ENCODE measurements at regions of chr6 and their contacts with region 1.

Region 1: GRCh38 chr6:34696739-34697543 is at the start of gene ILRUN:
- DNase-seq: peak; percentile 91
- H3K4me3 Mint-ChIP-seq: peak within 1 kb of the TSS; percentile 92
- H3K27ac Mint-ChIP-seq: peak within 1 kb of the TSS; percentile 91
- H3K4me1 Mint-ChIP-seq: peaks cover 34% of the 10 kb centered on the region
- H3K27me3 Mint-ChIP-seq: no peaks in the 10 kb centered on the region
- total RNA-seq, gene ILRUN: 68.7 and 72.9 TPM in 2 replicates

Region 2: DNA sequence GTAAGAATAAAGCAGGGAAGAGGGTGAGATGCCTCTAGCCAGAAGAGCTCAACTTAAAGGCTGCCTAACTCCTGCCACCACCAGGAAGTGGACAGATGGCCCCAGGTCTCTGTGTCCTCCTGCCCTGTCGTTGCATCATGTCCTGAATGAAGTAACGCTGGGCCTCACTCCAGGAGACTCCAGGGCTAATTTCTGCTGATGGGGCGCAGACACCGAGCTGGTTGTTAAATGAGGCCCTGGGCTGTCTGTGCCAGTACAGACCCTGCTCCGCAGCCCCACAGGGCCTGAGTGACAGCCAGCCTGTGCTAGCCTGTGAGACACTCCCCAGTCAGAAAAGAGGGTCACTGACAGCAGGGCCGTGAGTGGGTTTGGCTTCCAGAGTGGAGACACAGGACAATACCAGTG is 956.7 kb before region 1 on chr6:
- intact Hi-C with region 1: no loop called
- DNase-seq: no peak
- H3K4me3 Mint-ChIP-seq: no peak overlapping the region
- H3K27ac Mint-ChIP-seq: no peak overlapping the region
- H3K4me1 Mint-ChIP-seq: peaks cover 2% of the 10 kb centered on the region
- H3K27me3 Mint-ChIP-seq: peaks cover 14% of the 10 kb centered on the region

Region 3: DNA sequence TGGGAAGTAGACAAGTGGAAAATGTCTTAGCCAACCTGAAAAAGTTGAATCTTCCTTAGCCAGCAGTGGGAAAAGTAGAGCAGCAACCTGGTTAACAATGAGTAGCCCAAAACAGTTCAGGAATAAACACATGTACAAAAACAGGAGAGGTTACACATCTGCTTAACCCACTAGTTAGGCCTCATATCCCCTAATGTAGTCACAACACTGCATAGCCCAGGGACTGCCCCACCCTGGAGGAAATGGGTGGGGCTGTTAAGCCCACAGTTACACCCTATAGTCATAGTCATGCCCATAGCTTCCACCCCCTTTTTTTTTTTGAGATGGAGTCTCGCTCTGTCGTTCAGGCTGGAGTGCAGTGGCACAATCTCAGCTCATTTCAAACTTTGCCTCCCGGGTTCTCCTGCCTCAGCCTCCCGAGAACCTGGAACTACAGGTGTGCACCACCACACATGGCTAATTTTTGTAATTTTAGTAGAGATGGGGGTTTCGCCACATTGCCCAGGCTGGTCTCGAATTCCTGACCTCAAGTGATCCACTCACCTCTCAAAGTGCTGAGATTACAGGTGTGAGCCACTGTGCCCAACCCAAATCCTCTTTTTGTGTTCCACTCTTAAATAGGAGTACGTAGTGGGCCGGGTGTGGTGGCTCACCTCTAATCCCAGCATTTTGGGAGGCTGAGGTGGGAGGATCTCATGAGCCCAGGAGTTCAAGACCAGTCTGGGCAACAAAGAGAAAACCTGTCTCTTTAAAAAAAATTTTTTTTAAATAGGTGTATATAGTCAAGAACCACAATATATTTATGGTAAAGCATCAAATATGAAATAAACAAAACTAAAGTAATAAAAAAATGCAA is 24.9 kb before region 1 on chr6:
- intact Hi-C with region 1: loop called (anchors 2 kb)
- DNase-seq: peak; percentile 74
- H3K4me3 Mint-ChIP-seq: peak overlapping the region; percentile 64
- H3K27ac Mint-ChIP-seq: peak overlapping the region; percentile 94
- H3K4me1 Mint-ChIP-seq: peaks cover 47% of the 10 kb centered on the region
- H3K27me3 Mint-ChIP-seq: no peaks in the 10 kb centered on the region

Measured in activated T-helper 2 cell treated with anti-CD3 and anti-CD28 coated beads, Interferon-gamma antibody, Interleukin-2, Interleukin-4, amounts not matched to agents 10 μg/mL and 5 μg/mL and 100 μg/mL, durations not matched to agents 14 hours and 24 hours and 36 hours (primary cell).